H1 (cell line): ENCODE measurements at regions of chr1 and their contacts with region 1.

Region 1: DNA sequence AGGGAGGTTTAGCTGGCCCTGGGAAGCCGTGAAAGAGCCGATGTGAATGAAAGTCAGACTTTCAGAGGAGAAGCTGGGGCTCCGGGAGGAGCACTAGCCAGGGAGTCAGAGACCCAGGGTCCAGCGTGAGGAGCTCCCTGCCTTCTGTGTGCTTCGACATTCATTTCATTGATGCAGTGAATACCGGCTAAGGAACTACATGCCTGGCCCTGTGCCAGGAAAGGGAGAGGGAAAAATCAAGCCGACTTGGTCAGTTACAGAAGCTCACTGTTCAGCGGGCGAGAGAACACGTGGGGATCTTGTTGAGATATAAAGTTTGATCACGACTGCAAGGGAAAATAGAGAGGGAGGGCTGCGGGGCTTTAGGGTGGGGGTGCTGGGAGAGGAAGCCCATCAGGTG is 76.7 kb upstream of the RUNX3 start:
- DNase-seq: no peak
- H3K4me3 ChIP-seq: no peak overlapping the region
- H3K27ac ChIP-seq: no peak overlapping the region
- H3K4me1 ChIP-seq: peaks cover 0 to 6% (median under 1%) of the 10 kb centered on the region in 4 experiments; a peak in 2 of 7 replicates
- H3K27me3 ChIP-seq: 0 out of 7 replicates have a peak, but pooled peaks cover 0 to 2% (median 0%) of the 10 kb centered on the region in 4 experiments
- CTCF ChIP-seq: no peak
- EP300 ChIP-seq: no peak
- POLR2A ChIP-seq: no peak
- RAD21 ChIP-seq: no peak

Region 2: GRCh38 chr1:24990779-24991641 is 15.8 kb before region 1 on chr1:
- CTCF ChIA-PET with region 1: interaction called, 10 read pairs
- POLR2A ChIA-PET with region 1: interaction called, 5 read pairs
- DNase-seq: no peak
- H3K4me3 ChIP-seq: no peak overlapping the region
- H3K27ac ChIP-seq: no peak overlapping the region
- H3K4me1 ChIP-seq: 0 out of 7 replicates have a peak, but pooled peaks cover 0 to 2% (median 0%) of the 10 kb centered on the region in 4 experiments
- H3K27me3 ChIP-seq: no peaks in the 10 kb centered on the region
- CTCF ChIP-seq: peak; percentile 29 to 47 (median 39)
- EP300 ChIP-seq: no peak
- POLR2A ChIP-seq: no peak
- RAD21 ChIP-seq: peak; percentile 48 to 63